Posterior cingulate gyrus (tissue), 11 donors: ENCODE measurements at regions of chr13 and their contacts with region 1.

Region 1: GRCh38 chr13:27826379-27827353 is 34.4 kb downstream of the GSX1 start:
- DNase-seq: peak; percentile 63 to 98 (median 82)

Region 2: GRCh38 chr13:27374650-27375049 is 452.0 kb before region 1 on chr13:
- intact Hi-C with region 1: loop called (anchors 1 kb)
- DNase-seq: peak in 5 of 10 donors; percentile 42 to 93 (median 52)

Region 3: DNA sequence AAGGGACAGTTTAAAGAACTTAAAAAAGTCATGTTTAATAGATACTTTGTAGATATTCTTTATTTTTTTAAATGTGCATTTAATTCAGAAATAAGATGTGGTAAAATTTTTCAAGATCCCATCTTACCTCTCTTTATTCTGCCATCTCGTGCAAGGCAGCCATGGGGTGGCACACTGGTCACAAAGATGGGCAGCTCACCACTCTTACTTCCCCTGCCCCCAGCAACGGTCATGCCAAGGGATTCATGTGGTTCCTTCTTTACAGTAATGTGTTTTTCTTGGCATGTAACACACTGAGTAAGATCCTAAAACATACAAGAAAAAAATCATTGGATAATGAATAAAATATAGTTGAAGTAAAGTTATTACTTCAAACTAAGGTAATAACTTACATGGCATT is 270.6 kb before region 1 on chr13:
- intact Hi-C with region 1: loop called (anchors 2 kb)
- DNase-seq: peak in 2 of 10 donors; percentile 21 to 22

Region 4: GRCh38 chr13:27658546-27658945 is 168.1 kb before region 1 on chr13:
- intact Hi-C with region 1: no loop called
- DNase-seq: no peak

Region 5: GRCh38 chr13:27953676-27954405 is 127.2 kb after region 1 on chr13:
- intact Hi-C with region 1: loop called (anchors 10 kb)
- DNase-seq: peak in 7 of 10 donors; percentile 29 to 92 (median 54)